AG04449 (cell line): ENCODE measurements at regions of chr17 and their contacts with region 1.

Region 1: DNA sequence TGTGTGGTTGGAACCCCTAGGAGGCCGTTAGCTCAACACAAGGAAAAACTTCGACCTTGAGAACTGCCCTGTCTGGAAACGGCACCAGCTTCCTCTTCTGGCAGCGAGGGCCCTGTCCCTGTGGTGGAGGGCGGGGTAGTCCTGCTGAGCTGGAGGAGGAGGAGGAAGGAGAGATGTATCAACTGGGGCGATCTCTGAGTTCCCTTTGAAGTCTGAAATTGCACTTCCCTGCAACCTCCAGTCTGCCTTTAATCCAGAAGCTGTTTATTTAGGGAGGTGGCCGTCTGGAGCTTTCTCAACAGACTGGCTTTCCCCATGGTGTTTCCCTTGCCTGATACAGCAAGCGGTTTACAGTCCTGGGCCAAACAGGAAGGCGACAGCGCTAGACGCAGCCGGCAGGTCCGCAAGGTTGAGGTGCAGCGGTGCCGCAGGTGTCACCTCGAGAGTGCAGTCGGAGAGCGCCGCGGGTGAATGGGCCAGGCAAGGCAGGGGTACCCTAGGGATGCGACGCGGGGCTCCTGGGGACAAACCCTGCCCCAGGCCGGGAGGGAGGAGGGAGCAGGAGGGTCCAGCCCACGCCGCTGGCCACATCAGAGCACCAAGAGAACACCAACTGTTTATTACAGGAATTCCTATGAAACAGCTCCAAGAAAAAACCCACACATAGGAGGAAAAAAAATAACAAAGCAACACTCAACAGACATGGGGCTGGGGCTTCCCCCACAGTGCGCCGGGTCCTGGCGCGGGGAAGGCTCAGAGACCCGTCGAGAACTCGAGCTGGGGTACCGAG is 11.4 kb upstream of the MRPS23 start:
- DNase-seq: no peak
- H3K4me3 ChIP-seq: peak overlapping the region; percentile 12
- CTCF ChIP-seq: no peak

Region 2: GRCh38 chr17:57649731-57650484 is 211.3 kb before region 1 on chr17:
- CTCF ChIA-PET with region 1: no interaction called
- POLR2A ChIA-PET with region 1: no interaction called
- DNase-seq: no peak
- H3K4me3 ChIP-seq: no peak overlapping the region
- CTCF ChIP-seq: no peak

Region 3: GRCh38 chr17:57875309-57876115 is 14.3 kb after region 1 on chr17:
- CTCF ChIA-PET with region 1: interaction called, 116 read pairs
- POLR2A ChIA-PET with region 1: interaction called, 14 read pairs
- DNase-seq: peak; percentile 94
- H3K4me3 ChIP-seq: peak overlapping the region; percentile 31
- CTCF ChIP-seq: peak; percentile 60

Region 4: DNA sequence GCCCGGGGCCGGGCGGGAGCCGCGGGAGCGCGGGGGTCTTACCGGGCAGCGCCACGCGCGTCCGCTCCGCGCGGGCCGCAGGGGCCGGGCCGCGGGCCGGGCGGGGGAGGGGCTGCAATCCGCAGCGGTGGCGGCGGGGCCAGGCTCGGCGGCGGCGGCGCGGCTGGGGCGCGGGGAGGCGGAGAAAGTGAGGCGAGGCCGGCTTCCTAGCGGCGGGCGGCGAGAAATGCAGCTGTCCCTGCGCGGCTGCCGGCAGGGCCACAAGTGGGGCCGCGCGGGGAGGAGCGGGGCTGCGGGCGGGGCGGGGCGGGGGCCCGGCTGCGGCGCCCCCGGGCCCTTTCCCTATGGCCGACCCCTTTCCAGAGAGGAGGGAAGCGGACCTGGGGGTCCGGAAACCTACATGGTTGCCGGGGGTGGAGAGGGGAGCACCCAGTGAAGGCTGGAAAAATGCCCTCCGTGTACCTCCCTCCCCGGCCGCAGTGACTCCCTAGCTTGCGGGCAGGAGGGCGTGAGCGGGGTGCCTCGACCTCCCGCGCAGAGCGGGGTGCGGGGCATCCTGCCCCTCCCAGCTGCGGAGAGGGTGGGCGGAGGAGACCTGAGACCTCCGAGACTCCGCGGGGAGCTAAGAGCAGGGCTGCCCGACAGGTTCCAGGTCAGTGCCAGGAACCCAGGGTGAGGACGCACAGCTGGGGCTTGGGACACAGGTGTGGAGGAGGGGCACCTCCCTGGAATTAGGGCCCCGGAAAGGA is 94.2 kb after region 1 on chr17 and contains the start of gene CUEDC1:
- CTCF ChIA-PET with region 1: interaction called, 56 read pairs
- POLR2A ChIA-PET with region 1: interaction called, 5 read pairs
- DNase-seq: no peak
- H3K4me3 ChIP-seq: peak within 1 kb of the TSS; percentile 70
- CTCF ChIP-seq: peak; percentile 68

Region 5: DNA sequence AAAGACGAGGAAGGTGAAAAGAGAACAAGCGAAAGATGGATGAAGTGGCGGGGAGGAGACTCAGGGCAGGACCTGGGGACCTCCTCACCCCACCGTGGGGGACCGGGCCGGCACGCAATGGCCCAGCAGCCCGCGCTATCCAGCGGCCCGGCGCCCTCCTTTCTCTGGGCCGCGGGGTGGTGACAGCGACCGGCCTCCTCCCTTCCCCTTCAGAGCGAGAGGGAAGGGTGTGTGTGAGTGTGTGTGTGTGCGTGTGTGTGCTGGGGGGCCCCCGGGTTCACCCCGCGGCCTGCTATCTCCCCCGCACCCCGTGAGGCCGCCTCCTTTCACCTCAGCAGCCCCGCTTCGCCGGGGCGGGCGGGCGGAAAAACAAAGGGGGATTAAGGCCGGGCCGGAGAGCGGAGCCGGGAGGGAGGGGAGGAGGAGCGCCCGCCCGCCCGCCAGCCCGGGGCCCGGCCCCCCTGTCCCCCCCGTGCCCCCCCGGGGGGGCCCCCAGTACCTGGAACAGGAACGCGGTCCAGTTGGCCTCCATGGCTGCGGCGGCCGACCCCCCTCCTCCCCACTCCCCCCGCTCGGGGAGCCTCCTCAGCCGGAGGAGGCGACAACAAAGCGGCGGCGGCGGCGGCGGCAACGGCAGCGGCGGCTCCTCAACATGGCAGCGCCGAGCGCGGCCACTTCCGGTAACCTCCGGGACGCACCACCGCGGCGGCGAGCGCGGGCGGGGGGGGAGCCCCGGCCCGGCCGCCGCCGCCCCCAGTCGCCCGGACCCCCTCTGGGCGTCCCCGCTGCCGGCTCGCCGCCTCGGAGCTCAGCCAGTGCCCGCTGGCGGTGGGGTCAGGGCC is 126.6 kb after region 1 on chr17 and contains the start of gene VEZF1:
- CTCF ChIA-PET with region 1: interaction called, 1,361 read pairs
- POLR2A ChIA-PET with region 1: interaction called, 5 read pairs
- DNase-seq: no peak
- H3K4me3 ChIP-seq: peak within 1 kb of the TSS; percentile 80
- CTCF ChIP-seq: no peak